ENCODE measurements at regions of chr3 and their contacts with region 1.

Region 1: GRCh38 chr3:22117751-22118346 is 366.8 kb upstream of the ZNF385D start:
- DNase-seq: no peak
- H3K4me3 Mint-ChIP-seq: no peak overlapping the region
- H3K27ac Mint-ChIP-seq: no peak overlapping the region
- H3K4me1 Mint-ChIP-seq: peaks cover 9% of the 10 kb centered on the region
- H3K27me3 Mint-ChIP-seq: no peaks in the 10 kb centered on the region
- CTCF ChIP-seq: peak; percentile 27

Region 2: DNA sequence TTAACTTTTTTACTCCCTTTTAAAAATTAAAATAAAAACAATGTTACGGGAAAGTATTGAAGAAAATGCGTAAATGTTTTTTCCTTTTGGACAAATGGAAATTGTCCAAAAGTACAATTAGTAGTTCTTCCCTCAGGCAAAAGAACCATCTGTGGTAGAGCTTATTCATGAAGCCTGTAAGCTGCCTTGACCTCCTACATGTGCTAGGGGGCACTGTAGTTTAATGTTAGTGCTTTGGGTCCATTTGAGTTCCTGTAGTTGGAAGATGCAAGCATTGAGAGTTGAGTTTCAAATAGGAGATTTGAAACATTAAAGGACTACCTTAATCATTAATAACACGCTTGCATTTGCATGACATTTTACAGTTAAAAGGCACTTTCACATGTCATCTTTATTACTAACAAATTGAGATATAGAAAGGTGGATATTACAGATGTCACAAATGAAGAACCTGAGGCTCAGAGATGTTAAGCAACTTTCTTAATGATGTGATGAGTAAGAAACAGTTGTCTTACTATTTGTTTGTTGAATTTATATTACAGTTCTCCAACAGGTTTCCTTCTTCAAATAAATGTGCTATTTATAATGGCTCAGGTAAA is 365.0 kb before region 1 on chr3:
- CTCF ChIA-PET with region 1: no interaction called
- intact Hi-C with region 1: loop called (anchors 5 kb)
- DNase-seq: peak; percentile 8
- H3K4me3 Mint-ChIP-seq: no peak overlapping the region
- H3K27ac Mint-ChIP-seq: no peak overlapping the region
- H3K4me1 Mint-ChIP-seq: no peaks in the 10 kb centered on the region
- H3K27me3 Mint-ChIP-seq: no peaks in the 10 kb centered on the region
- CTCF ChIP-seq: no peak

Region 3: GRCh38 chr3:21879184-21879886 is 238.5 kb before region 1 on chr3:
- CTCF ChIA-PET with region 1: no interaction called
- intact Hi-C with region 1: no loop called
- DNase-seq: no peak
- H3K4me3 Mint-ChIP-seq: no peak overlapping the region
- H3K27ac Mint-ChIP-seq: no peak overlapping the region
- H3K4me1 Mint-ChIP-seq: no peaks in the 10 kb centered on the region
- H3K27me3 Mint-ChIP-seq: no peaks in the 10 kb centered on the region
- CTCF ChIP-seq: no peak

Region 4: DNA sequence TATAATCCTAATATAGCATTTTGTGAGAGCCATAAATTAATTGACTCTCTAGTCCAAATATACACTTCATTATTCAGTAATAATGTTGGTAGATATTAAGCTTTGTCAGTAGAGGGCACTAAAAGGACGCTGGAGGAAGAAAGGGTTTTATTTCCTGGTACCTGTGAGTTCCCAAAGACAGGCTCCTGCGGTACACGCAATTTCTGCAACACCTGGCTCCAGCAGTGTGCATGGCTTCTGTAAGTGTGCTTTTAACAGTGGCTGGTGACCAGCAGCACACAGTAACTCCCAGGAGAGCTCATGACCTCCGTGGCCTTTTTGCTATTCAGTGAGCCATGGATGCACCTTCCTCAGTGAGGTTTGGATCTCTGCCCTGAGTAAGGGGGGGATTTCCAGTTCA is 28.6 kb before region 1 on chr3:
- CTCF ChIA-PET with region 1: interaction called, 4 read pairs
- intact Hi-C with region 1: loop called (anchors 1 kb)
- DNase-seq: peak; percentile 49
- H3K4me3 Mint-ChIP-seq: no peak overlapping the region
- H3K27ac Mint-ChIP-seq: no peak overlapping the region
- H3K4me1 Mint-ChIP-seq: no peaks in the 10 kb centered on the region
- H3K27me3 Mint-ChIP-seq: no peaks in the 10 kb centered on the region
- CTCF ChIP-seq: peak; percentile 32

Region 5: DNA sequence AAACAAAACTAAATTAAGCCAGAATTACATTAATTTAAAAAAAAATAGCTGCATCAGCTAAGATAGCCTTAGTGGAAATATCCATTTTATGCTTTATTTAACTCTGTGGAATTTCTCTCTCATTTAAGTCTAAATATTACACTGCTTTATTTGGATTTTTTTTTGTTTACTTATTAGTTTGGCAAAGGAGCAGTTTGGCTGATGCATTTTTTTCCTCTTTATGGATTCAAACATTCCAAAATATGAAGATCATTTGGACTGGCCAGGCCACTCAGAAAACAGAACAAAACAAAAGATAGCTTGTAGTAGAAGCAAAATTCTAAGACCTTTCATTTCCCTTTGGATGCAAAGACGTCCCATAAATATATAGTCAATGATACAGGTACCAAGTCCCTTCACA is 377.9 kb after region 1 on chr3:
- CTCF ChIA-PET with region 1: no interaction called
- intact Hi-C with region 1: no loop called
- DNase-seq: no peak
- H3K4me3 Mint-ChIP-seq: no peak overlapping the region
- H3K27ac Mint-ChIP-seq: no peak overlapping the region
- H3K4me1 Mint-ChIP-seq: no peaks in the 10 kb centered on the region
- H3K27me3 Mint-ChIP-seq: no peaks in the 10 kb centered on the region
- CTCF ChIP-seq: no peak